SK-N-SH (cell line): ENCODE measurements at regions of chr9 and their contacts with region 1.

Region 1: DNA sequence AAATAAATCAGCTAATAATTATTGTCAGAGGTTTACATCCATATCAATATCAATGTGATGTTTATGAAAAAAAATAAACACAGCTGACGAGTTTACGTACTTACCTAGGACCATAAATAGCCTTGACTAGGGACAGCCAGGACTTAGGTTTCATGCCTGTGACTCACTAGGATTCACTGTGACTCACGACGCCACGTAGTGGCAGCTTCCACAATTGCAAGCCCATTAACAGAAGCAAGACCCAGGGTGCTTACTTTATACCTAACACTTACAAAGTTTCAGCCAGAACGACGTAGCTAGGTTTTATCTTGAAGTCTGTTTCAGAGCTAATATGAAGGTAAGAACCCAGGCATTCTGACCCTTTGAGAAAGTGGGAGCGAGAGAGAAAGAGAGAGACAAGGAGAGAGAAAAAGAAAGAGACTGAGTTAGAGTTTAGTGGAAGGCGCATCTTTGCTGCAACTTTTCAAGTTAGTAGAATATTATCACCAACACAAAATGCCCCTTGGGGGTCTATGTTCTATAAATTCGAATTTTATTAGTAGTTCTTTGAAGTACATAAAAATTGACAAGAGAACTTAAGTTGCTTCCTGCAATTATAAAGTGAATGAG is 191.2 kb downstream of the GNA14 start:
- DNase-seq: peak; percentile 76
- H3K4me3 ChIP-seq: no peak overlapping the region
- H3K27ac ChIP-seq: peak overlapping the region in 1 of 2 experiments; percentile 1; a peak in 2 of 4 replicates
- H3K4me1 ChIP-seq: peaks cover 9 to 18% of the 10 kb centered on the region in 2 experiments; a peak in 2 of 4 replicates
- H3K27me3 ChIP-seq: no peaks in the 10 kb centered on the region
- CTCF ChIP-seq: peak; percentile 88
- EP300 ChIP-seq: no peak
- RAD21 ChIP-seq: peak; percentile 74

Region 2: DNA sequence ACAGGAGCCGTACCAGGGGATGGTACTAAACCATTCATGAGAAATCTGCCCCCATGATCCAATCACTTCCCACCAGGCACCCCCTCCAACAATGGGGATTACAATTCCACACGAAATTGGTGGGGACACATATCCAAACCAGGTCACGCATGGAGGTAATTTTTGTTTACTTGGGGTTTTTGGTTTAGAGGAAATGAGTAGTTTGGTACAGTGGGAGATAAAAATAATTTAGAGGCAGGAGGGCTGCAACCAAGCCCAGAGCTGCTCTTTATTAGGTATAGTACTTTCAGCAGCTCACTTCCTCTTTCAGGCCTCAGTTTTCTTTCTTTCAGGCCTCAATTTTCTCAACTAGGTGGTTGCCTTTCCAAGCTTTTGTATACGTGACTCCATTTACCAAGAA is 574.2 kb before region 1 on chr9:
- CTCF ChIA-PET with region 1: no interaction called
- POLR2A ChIA-PET with region 1: no interaction called
- DNase-seq: no peak
- H3K4me3 ChIP-seq: no peak overlapping the region
- H3K27ac ChIP-seq: no peak overlapping the region
- H3K4me1 ChIP-seq: no peaks in the 10 kb centered on the region
- H3K27me3 ChIP-seq: peaks cover 10% of the 10 kb centered on the region; the same call in 1 of the 2 replicates
- CTCF ChIP-seq: no peak
- EP300 ChIP-seq: no peak
- RAD21 ChIP-seq: no peak

Region 3: GRCh38 chr9:76893395-76893932 is 563.5 kb before region 1 on chr9:
- CTCF ChIA-PET with region 1: no interaction called
- POLR2A ChIA-PET with region 1: no interaction called
- DNase-seq: no peak
- H3K4me3 ChIP-seq: no peak overlapping the region
- H3K27ac ChIP-seq: no peak overlapping the region
- H3K4me1 ChIP-seq: no peaks in the 10 kb centered on the region
- H3K27me3 ChIP-seq: peaks cover 55% of the 10 kb centered on the region
- CTCF ChIP-seq: no peak
- EP300 ChIP-seq: no peak
- RAD21 ChIP-seq: no peak

Region 4: GRCh38 chr9:77271023-77271690 is 185.8 kb before region 1 on chr9:
- CTCF ChIA-PET with region 1: no interaction called
- POLR2A ChIA-PET with region 1: no interaction called
- DNase-seq: no peak
- H3K4me3 ChIP-seq: no peak overlapping the region
- H3K27ac ChIP-seq: no peak overlapping the region
- H3K4me1 ChIP-seq: no peaks in the 10 kb centered on the region
- H3K27me3 ChIP-seq: no peaks in the 10 kb centered on the region
- CTCF ChIP-seq: no peak
- EP300 ChIP-seq: no peak
- RAD21 ChIP-seq: no peak

Region 5: DNA sequence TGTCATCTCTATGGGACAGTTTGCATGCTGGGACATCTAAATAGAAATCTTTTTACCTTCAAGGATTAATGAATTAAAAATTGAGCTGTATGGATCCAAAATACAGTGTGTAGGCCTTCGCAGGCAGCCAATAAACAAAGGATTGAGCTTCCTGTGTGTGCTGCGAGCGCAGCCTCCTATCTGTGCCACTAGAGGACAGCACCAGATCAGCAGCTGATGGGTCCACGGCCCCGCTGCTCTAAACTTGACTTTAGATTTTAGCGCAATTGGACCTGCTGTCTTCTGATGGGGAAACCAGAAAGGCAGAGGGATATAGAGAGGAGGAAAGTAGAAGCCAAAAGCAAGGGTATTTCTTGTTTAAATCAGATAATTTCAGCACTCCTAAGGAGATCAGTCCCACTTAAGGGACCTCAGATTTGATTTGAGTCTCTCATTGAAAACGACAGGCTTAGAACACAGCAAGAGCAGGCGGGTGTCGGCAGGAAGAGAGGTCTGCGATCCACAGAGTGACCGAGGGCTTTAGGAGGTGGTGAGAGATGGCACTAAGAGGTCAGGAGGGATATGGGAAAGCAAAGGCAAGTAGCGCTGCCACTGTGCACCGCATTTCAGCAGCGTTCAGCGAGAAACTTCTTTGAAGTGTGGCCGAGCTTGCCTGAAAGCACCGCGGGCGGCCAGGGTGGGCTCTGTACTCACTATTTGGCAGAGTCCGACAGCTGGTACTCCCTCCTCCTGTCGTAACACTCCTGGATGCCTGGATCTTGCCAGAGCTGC is 23.1 kb before region 1 on chr9:
- CTCF ChIA-PET with region 1: interaction called, 147 read pairs
- POLR2A ChIA-PET with region 1: no interaction called
- DNase-seq: peak; percentile 85
- H3K4me3 ChIP-seq: no peak overlapping the region; a peak in 1 of 4 replicates
- H3K27ac ChIP-seq: no peak overlapping the region
- H3K4me1 ChIP-seq: peaks cover 11 to 13% of the 10 kb centered on the region in 2 experiments; a peak in 2 of 4 replicates
- H3K27me3 ChIP-seq: no peaks in the 10 kb centered on the region
- CTCF ChIP-seq: peak; percentile 99
- EP300 ChIP-seq: no peak
- RAD21 ChIP-seq: peak; percentile 100

Region 6: GRCh38 chr9:77469515-77470231 is 12.7 kb after region 1 on chr9:
- CTCF ChIA-PET with region 1: interaction called, 28 read pairs
- POLR2A ChIA-PET with region 1: no interaction called
- DNase-seq: no peak
- H3K4me3 ChIP-seq: no peak overlapping the region
- H3K27ac ChIP-seq: peak overlapping the region in 1 of 2 experiments; percentile 43; a peak in 2 of 4 replicates
- H3K4me1 ChIP-seq: peaks cover 0 to 16% of the 10 kb centered on the region in 2 experiments; a peak in 1 of 4 replicates
- H3K27me3 ChIP-seq: no peaks in the 10 kb centered on the region
- CTCF ChIP-seq: no peak
- EP300 ChIP-seq: peak in 1 of 2 experiments; percentile 79; a peak in 1 of 4 replicates
- RAD21 ChIP-seq: no peak

Region 7: GRCh38 chr9:77598524-77598923 is 141.6 kb after region 1 on chr9:
- CTCF ChIA-PET with region 1: interaction called, 20 read pairs
- POLR2A ChIA-PET with region 1: no interaction called
- DNase-seq: no peak
- H3K4me3 ChIP-seq: no peak overlapping the region
- H3K27ac ChIP-seq: peak overlapping the region in 1 of 2 experiments; percentile 62; a peak in 2 of 4 replicates
- H3K4me1 ChIP-seq: peaks cover 24 to 33% of the 10 kb centered on the region in 2 experiments; a peak in 3 of 4 replicates
- H3K27me3 ChIP-seq: no peaks in the 10 kb centered on the region
- CTCF ChIP-seq: no peak
- EP300 ChIP-seq: no peak
- RAD21 ChIP-seq: no peak

Region 8: GRCh38 chr9:77751341-77752091 is 294.6 kb after region 1 on chr9:
- CTCF ChIA-PET with region 1: interaction called, 65 read pairs
- POLR2A ChIA-PET with region 1: interaction called, 5 read pairs
- DNase-seq: peak; percentile 72
- H3K4me3 ChIP-seq: peak overlapping the region; percentile 1 to 27; a peak in 1 of 4 replicates
- H3K27ac ChIP-seq: peak overlapping the region; percentile 78 to 100
- H3K4me1 ChIP-seq: peaks cover 46 to 51% of the 10 kb centered on the region in 2 experiments; a peak in 3 of 4 replicates
- H3K27me3 ChIP-seq: no peaks in the 10 kb centered on the region
- CTCF ChIP-seq: peak; percentile 78
- EP300 ChIP-seq: peak; percentile 1 to 72; a peak in 2 of 4 replicates
- RAD21 ChIP-seq: peak; percentile 94